ENCODE measurements at regions of chr10 and their contacts with region 1.

Region 1: DNA sequence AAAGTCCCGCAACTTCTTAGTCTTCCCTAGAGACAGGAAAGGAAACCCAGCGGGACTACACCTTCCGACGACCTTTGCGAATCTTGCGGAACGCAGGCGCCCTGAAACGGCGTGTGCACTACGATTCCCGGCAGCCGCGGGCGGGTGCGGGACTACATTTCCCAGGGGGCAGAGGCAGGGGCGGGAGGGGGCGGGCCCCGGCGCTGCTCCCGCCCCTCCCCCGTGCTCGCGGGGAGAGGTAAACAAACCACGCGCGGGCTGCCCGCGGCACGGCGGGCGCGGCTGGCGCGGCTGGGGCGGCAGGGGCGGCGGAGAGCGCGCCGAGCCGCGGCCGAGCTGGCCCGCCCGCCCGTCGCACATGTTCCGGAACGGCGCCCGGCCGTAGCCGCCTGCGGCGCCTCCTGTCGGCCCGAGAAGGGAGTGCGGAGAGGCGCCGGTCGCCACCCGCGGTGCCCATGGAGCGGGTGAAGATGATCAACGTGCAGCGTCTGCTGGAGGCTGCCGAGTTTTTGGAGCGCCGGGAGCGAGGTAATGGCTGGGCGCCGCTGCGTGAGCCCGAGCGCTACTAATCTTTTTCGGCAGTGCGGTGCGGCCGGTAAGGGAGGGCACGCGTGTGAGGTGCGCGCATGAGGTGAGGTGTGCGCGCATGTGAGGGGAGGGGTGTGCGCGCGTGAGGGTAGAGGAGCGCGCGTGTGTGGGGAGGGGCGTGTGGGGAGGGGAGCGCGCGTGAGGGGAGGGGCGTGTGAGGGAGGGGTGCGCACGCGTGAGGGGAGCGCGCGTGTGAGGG is 18.5 kb downstream of the MXI1 start:
- DNase-seq: peak; percentile 93
- H3K4me3 ChIP-seq: peak overlapping the region; percentile 79
- H3K27ac ChIP-seq: peak overlapping the region; percentile 72
- H3K4me1 ChIP-seq: peaks cover 22% of the 10 kb centered on the region
- CTCF ChIP-seq: peak; percentile 55; the same call in 1 of the 2 replicates

Region 2: DNA sequence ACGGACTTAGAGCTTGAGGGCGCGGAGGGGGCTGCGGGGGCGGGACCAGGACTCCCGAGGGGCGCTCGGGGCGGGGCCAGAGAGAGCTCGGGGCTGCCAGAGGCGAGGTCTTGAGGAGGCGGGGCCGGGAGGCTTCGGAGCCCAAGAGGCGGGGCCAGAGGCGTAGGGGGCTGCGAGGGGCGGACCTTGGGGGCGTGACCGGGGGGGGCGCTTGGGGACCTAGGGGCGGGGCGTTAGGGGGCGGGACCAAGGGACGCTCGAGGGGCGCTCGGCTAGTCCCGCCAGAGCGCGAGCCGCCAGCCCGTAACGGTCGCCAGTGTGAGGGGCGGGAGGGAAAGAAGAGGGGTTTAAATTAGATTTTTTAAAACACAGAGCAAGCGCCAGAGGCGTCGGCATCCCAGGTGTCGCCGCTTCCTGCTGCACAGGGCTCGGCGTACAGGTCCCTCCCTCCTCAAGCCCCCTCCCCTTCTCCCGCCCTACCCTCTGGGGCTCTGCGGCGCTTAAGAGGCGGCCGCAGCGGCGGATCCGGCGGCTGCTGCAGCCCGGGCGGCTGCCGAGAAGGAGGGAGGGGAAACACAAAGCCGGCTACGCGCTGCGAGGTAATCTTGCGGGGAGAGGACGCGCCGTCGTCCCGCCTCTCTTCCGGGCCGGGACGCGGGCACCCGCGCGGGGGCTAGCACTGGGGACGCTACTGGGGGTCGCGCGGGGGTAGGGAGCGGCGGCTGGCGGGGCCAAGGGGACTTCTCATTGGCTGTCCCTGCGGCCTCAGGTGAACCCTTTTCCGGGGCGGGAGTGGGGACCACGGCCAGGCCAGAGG is 218.0 kb before region 1 on chr10 and contains the start of gene ADD3:
- CTCF ChIA-PET with region 1: no interaction called
- POLR2A ChIA-PET with region 1: no interaction called
- intact Hi-C with region 1: loop called (anchors 1 kb)
- DNase-seq: peak; percentile 97
- H3K4me3 ChIP-seq: peak within 1 kb of the TSS; percentile 96
- H3K27ac ChIP-seq: peak within 1 kb of the TSS; percentile 84
- H3K4me1 ChIP-seq: peaks cover 62% of the 10 kb centered on the region
- CTCF ChIP-seq: no peak
- total RNA-seq, gene ADD3: 53.3 and 75.8 TPM in 2 replicates

Region 3: DNA sequence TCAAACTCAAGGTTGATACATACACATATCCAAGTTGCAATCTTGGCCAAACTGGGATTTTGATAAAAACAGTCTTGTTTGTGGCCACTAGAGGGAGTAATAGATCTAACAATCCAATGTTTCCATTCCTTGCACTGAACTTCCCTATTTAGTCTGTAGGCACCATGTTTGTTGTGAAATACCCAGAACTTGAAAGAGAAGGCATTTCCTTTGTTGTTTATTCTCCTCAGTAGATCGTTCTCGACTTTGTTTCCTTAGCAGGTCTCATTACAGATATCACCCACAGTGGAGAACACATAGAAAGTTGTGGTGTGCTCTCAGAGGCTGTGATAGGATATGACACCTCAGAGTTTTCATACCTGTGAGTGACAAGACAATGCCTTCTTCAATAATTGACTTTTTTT is 88.8 kb before region 1 on chr10:
- CTCF ChIA-PET with region 1: interaction called, 5 read pairs
- POLR2A ChIA-PET with region 1: interaction called, 4 read pairs
- intact Hi-C with region 1: loop called (anchors 1 kb)
- DNase-seq: peak; percentile 83
- H3K4me3 ChIP-seq: no peak overlapping the region
- H3K27ac ChIP-seq: no peak overlapping the region
- H3K4me1 ChIP-seq: peaks cover 23% of the 10 kb centered on the region
- CTCF ChIP-seq: peak; percentile 98

Region 4: DNA sequence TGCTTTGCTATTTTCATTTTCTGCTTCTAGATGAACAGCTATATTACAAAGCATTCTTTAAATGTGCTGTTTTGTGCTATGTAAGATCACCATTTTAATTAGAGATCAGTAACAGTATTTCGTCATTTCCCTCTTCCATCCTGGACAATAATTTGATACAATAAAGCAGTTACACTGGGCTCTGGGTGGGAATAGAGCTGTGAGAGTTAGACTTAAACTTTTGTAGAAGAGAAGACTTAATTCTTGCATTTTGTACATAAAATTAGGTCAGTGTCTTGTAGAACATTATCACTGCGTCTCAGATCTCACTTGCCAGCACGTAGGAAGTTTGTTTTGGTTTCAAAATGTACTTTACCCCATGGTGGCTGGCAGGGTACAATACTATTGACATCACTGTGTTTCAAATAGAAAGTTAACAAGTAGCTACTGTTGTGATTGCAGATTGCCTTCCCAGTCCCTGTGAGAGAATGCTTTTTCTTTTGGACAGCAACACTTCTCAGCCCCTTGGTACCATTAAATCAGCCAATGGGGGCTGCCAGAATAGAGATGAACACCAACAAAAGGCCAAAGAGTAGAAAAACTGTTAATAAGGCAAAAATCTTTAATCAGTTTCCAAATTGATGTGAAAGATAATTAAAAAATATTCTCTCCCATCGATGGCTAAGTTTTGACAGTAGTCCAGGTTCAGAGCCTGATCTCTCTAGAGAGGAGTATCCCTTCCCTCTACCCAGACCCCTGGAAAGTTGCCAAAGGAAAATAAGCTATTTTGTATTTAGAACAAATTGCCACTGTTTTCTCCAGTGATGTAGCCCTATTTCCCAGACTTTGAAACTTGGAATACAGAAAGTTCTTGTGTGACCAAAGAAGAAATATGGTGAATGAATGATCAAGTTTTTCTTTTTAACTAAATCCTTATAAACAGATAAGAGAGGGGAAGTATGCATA is 43.7 kb after region 1 on chr10:
- CTCF ChIA-PET with region 1: interaction called, 3 read pairs
- POLR2A ChIA-PET with region 1: interaction called, 4 read pairs
- intact Hi-C with region 1: loop called (anchors 2 kb)
- DNase-seq: no peak
- H3K4me3 ChIP-seq: no peak overlapping the region
- H3K27ac ChIP-seq: no peak overlapping the region
- H3K4me1 ChIP-seq: peaks cover 27% of the 10 kb centered on the region
- CTCF ChIP-seq: no peak

Measured in OCI-LY7 (cell line).